GM12878 (cell line): ENCODE measurements at regions of chr20 and their contacts with region 1.

Region 1: DNA sequence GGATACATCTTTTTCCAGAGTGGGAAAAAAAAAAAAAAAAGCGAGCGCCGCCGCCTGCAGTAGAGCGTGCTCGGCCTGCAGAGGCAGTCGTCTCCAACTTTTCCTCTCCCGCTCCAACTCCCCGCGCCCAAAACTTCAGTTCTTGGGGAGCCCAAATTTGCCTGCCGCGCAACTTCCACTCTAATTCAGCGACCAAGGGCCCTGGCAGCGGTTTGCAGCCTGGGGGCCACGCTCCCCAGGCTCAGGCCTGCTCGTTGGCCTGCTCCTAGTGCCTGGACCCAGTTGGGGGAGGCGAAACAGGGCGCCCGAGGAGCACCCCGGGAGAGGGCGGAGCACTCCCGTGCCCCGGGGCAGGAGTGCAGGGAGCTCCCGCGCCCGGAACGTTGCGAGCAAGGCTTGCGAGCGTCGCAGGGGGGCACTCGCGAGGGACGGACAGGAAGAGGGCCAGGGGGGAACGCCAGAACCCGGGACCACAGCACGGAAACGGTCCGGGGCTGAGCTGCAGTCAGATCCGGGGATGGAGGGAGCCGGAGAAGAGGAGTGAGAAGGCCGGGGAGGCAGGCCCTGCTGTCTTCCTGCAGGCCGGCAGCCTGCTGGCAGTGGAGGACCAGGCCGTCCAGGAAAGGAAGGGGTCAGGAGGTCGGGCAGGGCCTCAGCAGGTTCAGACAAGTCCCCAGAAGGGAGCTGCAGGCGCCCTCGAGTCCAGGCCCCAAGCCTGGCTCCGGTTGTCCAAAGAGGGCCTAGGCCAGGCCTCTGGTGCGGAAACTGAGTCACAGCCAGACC is at the start of gene STX16:
- DNase-seq: peak; percentile 80
- ATAC-seq: peak; percentile 82
- H3K4me3 ChIP-seq: peak within 1 kb of the TSS; percentile 92
- H3K27ac ChIP-seq: peak within 1 kb of the TSS; percentile 93
- H3K4me1 ChIP-seq: peaks cover 3% of the 10 kb centered on the region
- H3K27me3 ChIP-seq: no peaks in the 10 kb centered on the region
- CTCF ChIP-seq: peak; percentile 22 to 60 (median 44); a peak in 4 of 6 replicates
- EP300 ChIP-seq: peak; percentile 56 to 61; a peak in 2 of 4 replicates
- POLR2A ChIP-seq: peak; percentile 93
- RAD21 ChIP-seq: peak; percentile 25
- polyA plus RNA-seq, gene STX16: 6.3 to 11.1 TPM

Region 2: DNA sequence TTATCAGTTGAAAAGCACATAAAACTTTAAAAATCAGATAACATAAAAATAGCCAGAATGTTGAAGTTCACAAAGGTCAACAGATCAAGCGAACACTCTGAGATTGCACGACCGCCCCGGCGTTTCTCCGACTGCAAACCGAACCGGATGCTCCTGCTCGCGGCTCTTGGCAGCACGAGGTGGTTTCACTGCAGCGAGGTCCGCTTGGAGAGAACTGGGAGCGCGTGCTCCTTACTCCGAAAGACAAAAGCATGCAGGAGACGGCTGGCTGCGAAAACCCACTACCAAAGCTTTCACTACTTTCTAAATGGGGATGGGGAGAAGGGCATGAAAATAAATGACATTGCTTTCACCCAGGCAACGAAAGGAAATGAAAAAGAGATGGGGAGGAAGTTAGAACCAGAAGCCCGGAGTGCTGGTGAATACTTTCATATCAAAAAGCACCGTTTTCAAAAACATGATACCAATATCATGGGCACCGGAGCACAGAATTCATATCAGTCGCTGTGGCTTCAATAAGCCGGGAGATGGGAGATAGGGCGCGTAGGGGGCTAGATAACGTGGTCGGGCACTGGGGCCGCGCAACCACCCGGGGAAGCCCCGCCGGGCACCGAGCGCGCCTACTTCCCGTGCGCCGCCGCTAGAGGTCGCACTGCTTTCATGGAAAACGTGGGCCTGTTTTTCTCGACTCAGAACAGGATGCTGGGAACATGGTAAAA is 414.2 kb before region 1 on chr20:
- CTCF ChIA-PET with region 1: interaction called, 12 read pairs
- POLR2A ChIA-PET with region 1: no interaction called
- RAD21 ChIA-PET with region 1: interaction called, 7 read pairs
- SMC1A ChIA-PET with region 1: interaction called, 5 read pairs
- in situ Hi-C with region 1: no loop called
- intact Hi-C with region 1: loop called (anchors 1 kb)
- DNase-seq: peak; percentile 12
- ATAC-seq: peak; percentile 97
- H3K4me3 ChIP-seq: peak overlapping the region; percentile 49
- H3K27ac ChIP-seq: 0 out of 2 replicates have a peak overlapping the region, but pooled peaks have one; percentile 20
- H3K4me1 ChIP-seq: no peaks in the 10 kb centered on the region; the same call in 1 of the 2 replicates
- H3K27me3 ChIP-seq: no peaks in the 10 kb centered on the region
- CTCF ChIP-seq: peak; percentile 95 to 96 (median 95)
- EP300 ChIP-seq: no peak
- POLR2A ChIP-seq: no peak
- RAD21 ChIP-seq: peak; percentile 93

Region 3: DNA sequence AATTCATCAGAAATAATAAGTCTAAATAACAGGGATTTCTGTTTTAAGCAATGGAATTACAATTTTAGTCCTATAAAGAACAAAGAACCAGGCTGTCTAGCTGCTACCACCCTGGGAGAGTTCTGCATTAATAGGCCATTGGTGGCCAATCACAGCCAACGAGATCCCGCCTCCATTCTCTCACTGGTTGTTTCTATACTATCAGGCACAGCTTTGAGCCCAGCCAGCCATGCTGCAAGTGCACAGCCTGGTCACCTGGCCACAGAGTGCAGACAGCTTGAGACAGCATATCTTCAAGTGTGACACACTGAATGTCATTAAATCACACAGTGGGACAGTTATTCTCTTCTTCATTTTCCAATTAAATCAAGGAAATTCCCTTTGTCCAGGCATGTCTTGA is 357.5 kb before region 1 on chr20:
- CTCF ChIA-PET with region 1: no interaction called
- POLR2A ChIA-PET with region 1: no interaction called
- RAD21 ChIA-PET with region 1: no interaction called
- SMC1A ChIA-PET with region 1: no interaction called
- in situ Hi-C with region 1: no loop called
- intact Hi-C with region 1: no loop called
- DNase-seq: no peak
- ATAC-seq: peak; percentile 96
- H3K4me3 ChIP-seq: no peak overlapping the region
- H3K27ac ChIP-seq: no peak overlapping the region
- H3K4me1 ChIP-seq: no peaks in the 10 kb centered on the region
- H3K27me3 ChIP-seq: no peaks in the 10 kb centered on the region
- CTCF ChIP-seq: no peak
- EP300 ChIP-seq: no peak
- POLR2A ChIP-seq: no peak
- RAD21 ChIP-seq: no peak

Region 4: DNA sequence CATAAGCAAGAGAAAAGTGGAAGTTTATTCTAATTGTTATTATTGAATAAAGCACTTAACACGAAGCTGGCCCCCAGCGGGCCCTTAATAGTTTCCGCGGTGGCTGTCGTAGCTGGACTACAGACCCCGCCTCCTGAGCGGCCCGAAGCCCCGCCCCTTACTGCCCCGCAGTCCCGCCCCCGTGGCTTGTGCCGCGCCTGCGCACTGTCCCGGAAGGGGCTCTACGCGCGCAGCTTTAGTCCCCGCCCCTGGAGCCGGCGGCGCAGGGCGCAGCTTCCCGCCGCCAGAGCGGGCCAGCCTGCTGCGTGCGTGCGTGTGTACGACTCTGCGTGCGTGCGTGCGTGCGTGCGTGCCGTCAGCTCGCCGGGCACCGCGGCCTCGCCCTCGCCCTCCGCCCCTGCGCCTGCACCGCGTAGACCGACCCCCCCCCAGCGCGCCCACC is 262.1 kb before region 1 on chr20 and contains the start of gene VAPB:
- CTCF ChIA-PET with region 1: interaction called, 6 read pairs
- POLR2A ChIA-PET with region 1: interaction called, 4 read pairs
- RAD21 ChIA-PET with region 1: interaction called, 10 read pairs
- SMC1A ChIA-PET with region 1: interaction called, 3 read pairs
- in situ Hi-C with region 1: loop called (anchors 10 kb)
- intact Hi-C with region 1: no loop called
- DNase-seq: peak; percentile 88
- ATAC-seq: peak; percentile 98
- H3K4me3 ChIP-seq: peak within 1 kb of the TSS; percentile 81
- H3K27ac ChIP-seq: peak within 1 kb of the TSS; percentile 91
- H3K4me1 ChIP-seq: peaks cover 13% of the 10 kb centered on the region
- H3K27me3 ChIP-seq: no peaks in the 10 kb centered on the region
- CTCF ChIP-seq: no peak
- EP300 ChIP-seq: no peak
- POLR2A ChIP-seq: peak; percentile 87
- RAD21 ChIP-seq: no peak
- polyA plus RNA-seq, gene VAPB: 3.2 to 10.7 TPM

Region 5: GRCh38 chr20:58669287-58670006 is 18.5 kb after region 1 on chr20:
- CTCF ChIA-PET with region 1: interaction called, 5 read pairs
- POLR2A ChIA-PET with region 1: interaction called, 3 read pairs
- RAD21 ChIA-PET with region 1: interaction called, 10 read pairs
- SMC1A ChIA-PET with region 1: interaction called, 17 read pairs
- in situ Hi-C with region 1: no loop called
- intact Hi-C with region 1: no loop called
- DNase-seq: peak; percentile 32
- ATAC-seq: peak; percentile 74
- H3K4me3 ChIP-seq: no peak overlapping the region
- H3K27ac ChIP-seq: no peak overlapping the region
- H3K4me1 ChIP-seq: peaks cover 8% of the 10 kb centered on the region
- H3K27me3 ChIP-seq: no peaks in the 10 kb centered on the region
- CTCF ChIP-seq: no peak
- EP300 ChIP-seq: no peak
- POLR2A ChIP-seq: no peak
- RAD21 ChIP-seq: no peak

Region 6: GRCh38 chr20:58850693-58851174 is 199.8 kb after region 1 on chr20 and contains the start of gene GNAS-AS1:
- CTCF ChIA-PET with region 1: interaction called, 3 read pairs
- POLR2A ChIA-PET with region 1: no interaction called
- RAD21 ChIA-PET with region 1: no interaction called
- SMC1A ChIA-PET with region 1: no interaction called
- in situ Hi-C with region 1: no loop called
- intact Hi-C with region 1: loop called (anchors 5 kb)
- DNase-seq: peak; percentile 53
- ATAC-seq: peak; percentile 95
- H3K4me3 ChIP-seq: peak within 1 kb of the TSS; percentile 72
- H3K27ac ChIP-seq: peak within 1 kb of the TSS; percentile 39; the same call in 1 of the 2 replicates
- H3K4me1 ChIP-seq: 0 out of 2 replicates have a peak, but pooled peaks cover 3% of the 10 kb centered on the region
- H3K27me3 ChIP-seq: peaks cover 0 to 1% of the 10 kb centered on the region in 2 experiments; a peak in 2 of 4 replicates
- CTCF ChIP-seq: no peak
- EP300 ChIP-seq: no peak
- POLR2A ChIP-seq: peak; percentile 63
- RAD21 ChIP-seq: no peak
- polyA plus RNA-seq, gene GNAS-AS1: 0.06 to 0.35 TPM

Region 7: GRCh38 chr20:59032023-59032712 is 381.2 kb after region 1 on chr20 and contains the start of gene ATP5F1E:
- CTCF ChIA-PET with region 1: interaction called, 3 read pairs
- POLR2A ChIA-PET with region 1: interaction called, 3 read pairs
- RAD21 ChIA-PET with region 1: interaction called, 3 read pairs
- SMC1A ChIA-PET with region 1: no interaction called
- in situ Hi-C with region 1: no loop called
- intact Hi-C with region 1: loop called (anchors 10 kb)
- DNase-seq: peak; percentile 75
- ATAC-seq: peak; percentile 97
- H3K4me3 ChIP-seq: peak within 1 kb of the TSS; percentile 85
- H3K27ac ChIP-seq: peak within 1 kb of the TSS; percentile 90
- H3K4me1 ChIP-seq: no peaks in the 10 kb centered on the region; the same call in 1 of the 2 replicates
- H3K27me3 ChIP-seq: no peaks in the 10 kb centered on the region
- CTCF ChIP-seq: no peak
- EP300 ChIP-seq: peak in 1 of 2 experiments; percentile 48; a peak in 2 of 4 replicates
- POLR2A ChIP-seq: peak; percentile 98
- RAD21 ChIP-seq: no peak
- polyA plus RNA-seq, gene ATP5F1E: 169 to 219 TPM